ENCODE measurements at regions of chr11 and their contacts with region 1.

Region 1: GRCh38 chr11:83063073-83063754 is 8.5 kb downstream of the RAB30 start:
- DNase-seq: no peak
- ATAC-seq: peak in 3 of 4 donors; percentile 68 to 76 (median 75)
- H3K4me3 ChIP-seq: peak overlapping the region in 7 of 12 donors; percentile 0 to 39 (median 10)
- H3K27ac ChIP-seq: peak overlapping the region in 11 of 12 donors; percentile 1 to 63 (median 17)
- H3K4me1 ChIP-seq: peaks cover 0 to 59% (median 32%) of the 10 kb centered on the region in 12 donors
- H3K27me3 ChIP-seq: no peaks in the 10 kb centered on the region
- CTCF ChIP-seq: no peak
- POLR2A ChIP-seq: no peak

Region 2: DNA sequence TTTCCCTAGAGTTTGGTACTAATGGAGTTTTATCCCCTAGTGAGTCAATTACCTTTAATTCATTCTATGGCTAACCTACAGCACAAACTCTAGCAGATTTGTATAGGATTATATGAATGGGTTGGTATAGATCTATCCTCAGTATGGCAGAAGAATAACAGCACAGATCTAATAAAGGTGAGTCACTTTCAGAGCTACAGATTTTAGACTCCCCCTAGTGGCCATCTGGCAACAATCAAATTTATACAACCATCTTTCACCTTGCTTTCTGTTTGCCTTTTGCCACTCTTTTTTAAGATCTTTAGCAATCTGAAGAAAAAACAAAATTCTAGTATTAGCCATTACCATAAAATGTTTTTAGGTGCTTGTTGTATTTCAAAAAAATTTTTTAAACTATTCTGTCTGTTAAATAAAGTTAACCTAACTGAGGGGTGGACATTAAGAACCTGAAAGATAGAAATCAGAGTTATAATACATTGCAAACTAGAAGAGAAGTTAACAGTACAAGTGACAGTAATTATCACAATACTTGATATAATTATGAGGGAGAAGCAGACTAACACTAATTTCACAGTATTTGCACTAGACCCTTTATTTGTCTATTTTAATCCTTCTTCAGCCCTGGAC is 135.8 kb before region 1 on chr11:
- intact Hi-C with region 1: loop called in 1 of 10 experiments (anchors 10 kb)
- DNase-seq: no peak
- ATAC-seq: peak in 2 of 4 donors; percentile 41 to 64
- H3K4me3 ChIP-seq: no peak overlapping the region
- H3K27ac ChIP-seq: no peak overlapping the region
- H3K4me1 ChIP-seq: peaks cover 0 to 12% (median 0%) of the 10 kb centered on the region in 12 donors
- H3K27me3 ChIP-seq: no peaks in the 10 kb centered on the region
- CTCF ChIP-seq: peak; percentile 69 to 90 (median 86)
- POLR2A ChIP-seq: no peak

Region 3: GRCh38 chr11:82980292-82980691 is 82.9 kb before region 1 on chr11:
- intact Hi-C with region 1: loop called in 1 of 10 experiments (anchors 10 kb)
- DNase-seq: no peak
- ATAC-seq: peak in 1 of 4 donors; percentile 42
- H3K4me3 ChIP-seq: no peak overlapping the region
- H3K27ac ChIP-seq: no peak overlapping the region
- H3K4me1 ChIP-seq: peaks cover 0 to 24% (median 6%) of the 10 kb centered on the region in 12 donors
- H3K27me3 ChIP-seq: no peaks in the 10 kb centered on the region
- CTCF ChIP-seq: no peak
- POLR2A ChIP-seq: no peak

Measured in heart left ventricle (tissue), 16 donors.